Activated CD4-positive, alpha-beta memory T cell treated with anti-CD3 and anti-CD28 coated beads for 36 hours (primary cell): ENCODE measurements at regions of chr3 and their contacts with region 1.

Region 1: GRCh38 chr3:177109688-177110330 is 87.5 kb downstream of the TBL1XR1 start:
- DNase-seq: no peak
- H3K4me3 Mint-ChIP-seq: no peak overlapping the region
- H3K27ac Mint-ChIP-seq: no peak overlapping the region
- H3K4me1 Mint-ChIP-seq: peaks cover 68% of the 10 kb centered on the region
- H3K27me3 Mint-ChIP-seq: no peaks in the 10 kb centered on the region

Region 2: DNA sequence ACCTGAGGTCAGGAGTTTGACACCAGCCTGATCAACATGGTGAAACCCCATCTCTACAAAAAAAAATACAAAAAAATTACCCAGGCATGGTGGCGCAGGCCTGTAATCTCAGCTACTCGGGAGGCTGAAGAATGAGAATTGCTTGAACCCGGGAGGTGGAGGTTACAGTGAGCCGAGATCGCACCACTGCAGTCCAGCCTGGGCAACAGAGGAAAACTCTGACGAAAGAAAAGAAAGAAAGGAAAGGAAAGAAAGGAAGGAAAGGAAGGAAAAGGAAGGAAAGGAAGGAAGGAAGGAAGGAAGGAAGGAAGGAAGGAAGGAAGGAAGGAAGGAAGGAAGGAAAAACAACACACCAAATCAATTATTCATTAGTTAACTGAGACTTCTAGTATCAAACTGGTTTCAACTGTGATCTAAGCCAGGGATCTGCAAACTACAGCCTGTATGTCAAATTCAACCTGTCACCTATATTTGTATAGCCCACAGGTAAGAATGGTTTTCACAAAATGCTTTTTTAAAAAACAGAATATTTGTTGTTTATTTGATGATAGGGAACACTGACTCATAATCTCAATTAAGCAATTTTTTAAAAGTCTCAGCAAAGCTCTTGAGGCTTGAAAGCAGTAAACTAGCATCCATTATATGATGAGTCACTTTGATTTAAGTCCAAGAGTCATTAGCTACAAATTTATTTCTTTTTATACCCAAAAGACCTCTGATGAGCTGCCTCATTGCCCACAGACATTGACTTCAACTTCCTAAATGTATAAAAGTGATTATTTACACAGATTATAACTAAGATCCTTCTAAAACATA is 40.1 kb before region 1 on chr3:
- CTCF ChIA-PET with region 1: no interaction called
- POLR2A ChIA-PET with region 1: no interaction called
- intact Hi-C with region 1: loop called (anchors 5 kb)
- DNase-seq: no peak
- H3K4me3 Mint-ChIP-seq: no peak overlapping the region
- H3K27ac Mint-ChIP-seq: no peak overlapping the region
- H3K4me1 Mint-ChIP-seq: peaks cover 52% of the 10 kb centered on the region
- H3K27me3 Mint-ChIP-seq: no peaks in the 10 kb centered on the region